HCT116 (cell line): ENCODE measurements at regions of chr17 and their contacts with region 1.

Region 1: DNA sequence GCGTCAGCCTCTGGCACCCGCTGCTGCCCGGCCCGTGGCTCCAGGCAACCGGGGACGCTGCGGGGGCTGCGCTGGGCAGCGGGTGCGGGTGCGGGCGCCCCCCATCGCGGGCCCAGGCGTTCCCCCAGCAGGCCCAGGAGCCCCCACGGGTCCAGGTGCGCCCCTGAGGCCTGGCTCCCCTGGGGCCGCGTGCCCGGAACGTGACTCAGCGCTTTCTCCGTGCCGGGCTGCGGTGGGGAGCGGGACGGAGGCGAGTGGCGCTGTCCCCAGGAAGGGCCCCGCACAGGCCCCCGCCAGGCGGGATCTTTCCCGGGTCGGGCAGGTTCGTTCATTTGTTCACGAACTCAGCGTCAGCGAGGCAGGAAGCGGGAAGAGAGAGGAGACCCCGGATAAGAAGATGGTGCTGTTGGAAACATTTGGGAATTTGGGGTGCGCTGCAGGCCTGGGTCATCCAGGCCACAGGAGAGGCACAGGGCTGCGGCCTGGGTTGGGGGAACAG is 18.4 kb upstream of the EXOC7 start:
- DNase-seq: no peak
- ATAC-seq: no peak
- H3K4me3 ChIP-seq: no peak overlapping the region
- H3K27ac ChIP-seq: peak overlapping the region; percentile 47; the same call in 1 of the 2 replicates
- H3K4me1 ChIP-seq: peaks cover 0 to 15% of the 10 kb centered on the region in 2 experiments; a peak in 2 of 4 replicates
- H3K27me3 ChIP-seq: no peaks in the 10 kb centered on the region
- CTCF ChIP-seq: no peak
- POLR2A ChIP-seq: no peak
- RAD21 ChIP-seq: no peak

Region 2: GRCh38 chr17:75712446-75712845 is 409.5 kb before region 1 on chr17:
- CTCF ChIA-PET with region 1: no interaction called
- POLR2A ChIA-PET with region 1: no interaction called
- RAD21 ChIA-PET with region 1: no interaction called
- intact Hi-C with region 1: no loop called
- DNase-seq: no peak
- ATAC-seq: no peak
- H3K4me3 ChIP-seq: no peak overlapping the region
- H3K27ac ChIP-seq: no peak overlapping the region
- H3K4me1 ChIP-seq: peaks cover 26 to 44% of the 10 kb centered on the region in 2 experiments
- H3K27me3 ChIP-seq: no peaks in the 10 kb centered on the region
- CTCF ChIP-seq: no peak
- POLR2A ChIP-seq: no peak
- RAD21 ChIP-seq: no peak

Region 3: GRCh38 chr17:75927286-75927922 is 194.6 kb before region 1 on chr17:
- CTCF ChIA-PET with region 1: no interaction called
- POLR2A ChIA-PET with region 1: no interaction called
- RAD21 ChIA-PET with region 1: no interaction called
- intact Hi-C with region 1: no loop called
- DNase-seq: peak; percentile 46
- ATAC-seq: peak; percentile 94
- H3K4me3 ChIP-seq: no peak overlapping the region
- H3K27ac ChIP-seq: no peak overlapping the region
- H3K4me1 ChIP-seq: peaks cover 0 to 8% of the 10 kb centered on the region in 2 experiments; a peak in 2 of 4 replicates
- H3K27me3 ChIP-seq: no peaks in the 10 kb centered on the region
- CTCF ChIP-seq: peak; percentile 48 to 60 (median 50)
- POLR2A ChIP-seq: no peak
- RAD21 ChIP-seq: peak; percentile 52; the same call in 1 of the 2 replicates

Region 4: GRCh38 chr17:76053246-76054116 is 68.5 kb before region 1 on chr17:
- CTCF ChIA-PET with region 1: no interaction called
- POLR2A ChIA-PET with region 1: no interaction called
- RAD21 ChIA-PET with region 1: no interaction called
- intact Hi-C with region 1: no loop called
- DNase-seq: peak; percentile 80
- ATAC-seq: peak; percentile 82
- H3K4me3 ChIP-seq: peak overlapping the region; percentile 0 to 13; a peak in 2 of 4 replicates
- H3K27ac ChIP-seq: peak overlapping the region; percentile 79
- H3K4me1 ChIP-seq: peaks cover 40% of the 10 kb centered on the region in 2 experiments
- H3K27me3 ChIP-seq: no peaks in the 10 kb centered on the region
- CTCF ChIP-seq: no peak
- POLR2A ChIP-seq: no peak
- RAD21 ChIP-seq: no peak; the same call in 1 of the 2 replicates

Region 5: GRCh38 chr17:76132574-76133338 is 10.8 kb after region 1 on chr17:
- CTCF ChIA-PET with region 1: interaction called, 11 read pairs
- POLR2A ChIA-PET with region 1: interaction called, 3 read pairs
- RAD21 ChIA-PET with region 1: interaction called, 4 to 10 read pairs
- intact Hi-C with region 1: no loop called
- DNase-seq: peak; percentile 40
- ATAC-seq: peak; percentile 89
- H3K4me3 ChIP-seq: peak overlapping the region; percentile 31 to 54
- H3K27ac ChIP-seq: peak overlapping the region; percentile 59
- H3K4me1 ChIP-seq: peaks cover 24 to 26% of the 10 kb centered on the region in 2 experiments
- H3K27me3 ChIP-seq: no peaks in the 10 kb centered on the region
- CTCF ChIP-seq: peak in 2 of 3 experiments; percentile 21 to 35; a peak in 2 of 6 replicates
- POLR2A ChIP-seq: no peak
- RAD21 ChIP-seq: no peak

Region 6: DNA sequence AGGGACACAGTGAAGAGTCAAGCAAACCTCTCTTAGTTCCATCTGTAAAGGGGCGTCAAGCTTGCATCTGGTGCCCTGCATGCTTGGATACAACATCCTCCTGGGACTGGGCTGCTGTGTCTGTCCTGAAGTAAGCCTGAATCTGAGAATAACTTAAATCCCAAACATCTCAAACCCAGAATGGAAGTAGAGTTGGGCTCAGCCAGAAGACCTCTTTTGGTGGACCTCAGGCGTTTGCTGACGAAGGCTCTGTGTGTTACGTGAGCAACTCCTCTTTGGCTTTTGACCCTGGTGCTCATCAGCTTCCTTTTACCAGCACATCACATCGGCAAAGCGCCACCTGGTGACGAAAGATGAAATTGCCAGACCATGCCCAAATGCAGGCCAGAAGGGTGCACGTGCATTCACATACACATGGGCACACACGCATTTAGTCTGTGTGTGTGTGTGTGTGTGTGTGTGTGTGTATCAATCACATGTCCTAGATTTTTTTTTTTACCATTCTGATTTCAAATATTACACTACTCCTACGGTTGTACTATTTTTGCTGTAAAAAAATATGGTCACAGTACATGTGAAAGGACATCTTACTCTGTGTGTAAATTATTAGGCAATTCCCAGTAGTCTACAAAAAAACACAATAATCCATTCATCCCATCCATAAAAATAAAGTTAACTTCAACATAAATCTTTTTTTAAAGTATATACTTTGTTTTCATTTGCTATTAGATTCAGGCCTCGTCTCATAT is 60.2 kb after region 1 on chr17:
- CTCF ChIA-PET with region 1: interaction called, 47 read pairs
- POLR2A ChIA-PET with region 1: interaction called, 3 read pairs
- RAD21 ChIA-PET with region 1: interaction called, 8 to 12 read pairs
- intact Hi-C with region 1: loop called (anchors 1 kb)
- DNase-seq: peak; percentile 99
- ATAC-seq: peak; percentile 85
- H3K4me3 ChIP-seq: no peak overlapping the region
- H3K27ac ChIP-seq: no peak overlapping the region
- H3K4me1 ChIP-seq: peaks cover 17 to 34% of the 10 kb centered on the region in 2 experiments
- H3K27me3 ChIP-seq: no peaks in the 10 kb centered on the region
- CTCF ChIP-seq: peak; percentile 94 to 98 (median 96)
- POLR2A ChIP-seq: peak; percentile 42
- RAD21 ChIP-seq: peak; percentile 86

Region 7: GRCh38 chr17:76219670-76220383 is 97.8 kb after region 1 on chr17:
- CTCF ChIA-PET with region 1: no interaction called
- POLR2A ChIA-PET with region 1: no interaction called
- RAD21 ChIA-PET with region 1: no interaction called
- intact Hi-C with region 1: no loop called
- DNase-seq: no peak
- ATAC-seq: no peak
- H3K4me3 ChIP-seq: no peak overlapping the region
- H3K27ac ChIP-seq: no peak overlapping the region
- H3K4me1 ChIP-seq: no peaks in the 10 kb centered on the region
- H3K27me3 ChIP-seq: no peaks in the 10 kb centered on the region
- CTCF ChIP-seq: no peak
- POLR2A ChIP-seq: no peak
- RAD21 ChIP-seq: no peak